ENCODE measurements at regions of chr10 and their contacts with region 1.

Region 1: GRCh38 chr10:29304264-29305030 is 15.6 kb downstream of the LYZL1 start:
- H3K4me3 ChIP-seq: no peak overlapping the region
- H3K27ac ChIP-seq: no peak overlapping the region; the same call in 1 of the 2 replicates
- H3K4me1 ChIP-seq: no peaks in the 10 kb centered on the region; the same call in 1 of the 2 replicates
- CTCF ChIP-seq: peak; percentile 82

Region 2: DNA sequence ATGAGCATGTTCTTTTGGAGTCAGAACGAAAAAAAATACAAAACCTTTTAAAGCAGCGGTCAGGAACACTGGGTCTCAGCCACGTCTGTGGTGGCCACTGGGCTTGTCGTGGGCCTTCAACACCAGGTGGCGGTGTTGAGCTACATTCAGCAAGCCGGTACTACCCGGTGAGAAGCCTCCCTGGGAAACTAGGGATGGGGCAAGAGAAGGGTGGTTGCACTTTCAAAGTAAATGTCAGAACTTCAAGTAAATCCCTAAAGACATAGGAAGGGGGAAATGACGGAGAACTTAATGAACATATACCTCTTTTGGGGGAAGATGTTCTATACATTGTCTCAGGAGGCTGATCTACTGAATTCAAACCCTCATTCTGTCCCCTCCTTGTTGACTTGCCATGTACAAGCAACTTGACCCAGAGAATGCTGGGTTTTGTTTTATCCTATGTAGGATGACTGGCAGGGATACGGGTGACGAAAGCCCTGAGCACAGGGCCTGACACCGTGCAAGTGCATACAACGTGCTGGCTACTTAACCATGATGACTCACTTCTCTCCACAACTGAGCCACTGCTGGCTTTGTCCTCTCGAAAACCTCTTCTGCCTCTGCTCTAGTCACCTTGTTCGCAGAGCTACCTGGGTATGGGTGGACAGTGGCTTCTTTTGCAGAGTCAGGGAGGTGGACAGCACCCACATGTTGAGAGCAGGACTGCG is 676.1 kb before region 1 on chr10:
- CTCF ChIA-PET with region 1: interaction called, 17 read pairs
- POLR2A ChIA-PET with region 1: no interaction called
- H3K4me3 ChIP-seq: no peak overlapping the region
- H3K27ac ChIP-seq: no peak overlapping the region
- H3K4me1 ChIP-seq: peaks cover 10% of the 10 kb centered on the region; the same call in 1 of the 2 replicates
- CTCF ChIP-seq: peak; percentile 66

Region 3: DNA sequence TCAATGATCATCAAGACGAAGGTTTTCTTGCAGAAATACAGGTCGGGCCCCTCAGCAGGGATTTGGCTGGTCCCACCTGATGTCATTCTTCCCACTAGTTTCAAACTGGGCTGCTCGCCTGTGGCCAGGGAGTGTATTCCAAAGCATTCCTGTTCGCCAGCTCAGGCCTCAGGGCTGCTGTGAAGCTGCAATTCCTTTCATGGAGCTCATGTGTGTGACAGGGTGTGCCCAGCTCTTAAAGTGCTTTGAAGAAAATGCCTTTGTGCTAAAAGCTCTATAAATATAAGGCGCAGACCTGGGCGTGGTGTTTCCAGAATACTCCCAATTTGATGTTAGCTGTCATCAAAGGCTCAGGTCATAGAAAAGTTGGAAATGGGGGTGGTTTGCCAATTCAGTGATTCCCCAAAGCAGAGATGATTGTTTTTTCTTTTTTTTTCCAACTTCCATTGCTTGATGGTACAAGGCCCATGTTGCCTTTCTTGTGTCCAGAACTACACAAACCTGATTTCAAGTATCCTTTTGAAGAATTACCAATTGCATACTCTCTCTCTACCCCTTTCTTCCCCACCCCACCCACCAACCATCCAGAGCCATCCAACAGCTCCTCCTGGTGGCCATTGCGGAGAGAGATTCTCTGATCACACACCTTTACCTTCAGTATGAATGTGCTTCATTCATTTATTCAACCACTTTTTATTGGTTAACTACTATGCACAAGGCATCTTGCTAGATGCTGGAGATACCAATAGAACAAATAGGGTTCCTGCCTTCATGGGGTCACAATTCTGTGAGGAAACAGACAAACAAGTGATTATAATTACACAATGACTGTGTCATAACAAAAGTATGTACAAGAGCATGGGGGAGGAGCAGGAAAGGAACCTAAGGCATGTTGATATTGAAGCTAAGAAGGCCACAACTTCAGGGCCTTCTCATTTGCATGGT is 312.8 kb before region 1 on chr10:
- CTCF ChIA-PET with region 1: interaction called, 12 read pairs
- POLR2A ChIA-PET with region 1: no interaction called
- H3K4me3 ChIP-seq: no peak overlapping the region
- H3K27ac ChIP-seq: no peak overlapping the region
- H3K4me1 ChIP-seq: no peaks in the 10 kb centered on the region
- CTCF ChIP-seq: no peak; the same call in 1 of the 2 replicates

Region 4: DNA sequence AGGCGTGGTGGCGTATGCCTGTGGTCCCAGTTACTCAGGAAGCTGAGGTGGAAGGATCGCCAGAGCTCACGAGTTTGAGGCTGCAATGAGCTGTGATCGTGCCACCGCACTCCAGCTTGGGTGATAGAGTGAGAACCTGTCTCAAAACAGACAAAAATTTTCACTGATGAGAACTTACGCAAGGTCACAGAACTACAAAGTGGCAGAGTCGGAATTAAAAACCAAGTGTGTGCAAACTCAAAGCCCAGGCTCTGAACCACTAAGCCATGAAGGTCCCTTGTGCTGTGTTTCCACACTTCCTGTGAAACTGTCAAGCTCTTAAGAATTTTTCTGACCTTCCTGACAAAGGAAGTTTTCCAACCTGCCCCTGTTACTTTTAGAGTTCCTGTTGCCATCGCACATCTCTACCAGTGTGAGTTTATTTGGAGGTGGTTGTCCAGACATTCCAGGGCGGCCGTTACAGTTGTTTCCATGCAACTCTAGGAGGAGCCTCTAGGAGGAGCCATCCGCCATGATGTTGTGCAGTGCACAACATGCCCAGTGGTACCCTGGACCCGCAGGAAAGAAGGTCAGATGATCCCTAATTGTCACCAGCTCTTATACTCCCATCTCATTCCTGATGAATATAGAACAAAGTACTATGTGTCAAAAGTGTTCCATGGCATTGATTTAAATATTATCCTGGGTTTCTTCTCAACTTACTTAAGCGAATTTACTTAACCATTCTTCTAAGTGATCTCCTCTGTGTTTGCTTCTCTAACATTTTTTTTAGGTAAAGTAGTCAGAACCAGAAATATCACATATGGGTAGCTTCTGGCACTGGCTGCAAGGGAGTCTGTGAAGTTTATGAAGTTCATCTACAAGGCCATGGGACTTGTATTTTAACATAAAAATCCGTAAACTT is 64.6 kb before region 1 on chr10:
- CTCF ChIA-PET with region 1: interaction called, 49 read pairs
- POLR2A ChIA-PET with region 1: no interaction called
- H3K4me3 ChIP-seq: no peak overlapping the region
- H3K27ac ChIP-seq: no peak overlapping the region
- H3K4me1 ChIP-seq: no peaks in the 10 kb centered on the region
- CTCF ChIP-seq: no peak

Region 5: DNA sequence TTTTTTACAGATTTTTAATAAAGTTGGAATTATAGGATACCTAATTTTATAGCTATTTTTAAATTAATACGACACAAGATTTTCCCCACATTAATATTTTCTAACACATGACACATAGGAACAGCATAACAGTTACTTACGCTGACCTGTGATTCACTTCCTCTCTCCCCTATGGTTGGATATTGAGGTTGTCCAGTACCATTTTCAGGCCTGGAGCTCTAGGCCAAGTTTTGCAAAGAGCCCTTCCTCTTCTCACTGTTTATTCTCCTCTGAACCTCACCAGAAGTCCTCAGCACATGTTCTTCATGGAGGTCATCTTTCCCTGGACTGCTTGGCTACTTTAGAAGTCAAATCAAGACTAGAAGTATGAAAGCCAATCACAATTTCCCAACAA is 12.6 kb after region 1 on chr10:
- CTCF ChIA-PET with region 1: interaction called, 11 read pairs
- POLR2A ChIA-PET with region 1: no interaction called
- H3K4me3 ChIP-seq: no peak overlapping the region
- H3K27ac ChIP-seq: no peak overlapping the region
- H3K4me1 ChIP-seq: peaks cover 9% of the 10 kb centered on the region
- CTCF ChIP-seq: no peak